ENCODE measurements at regions of chr19 and their contacts with region 1.

Region 1: GRCh38 chr19:41310033-41310758 is at the start of gene CCDC97:
- DNase-seq: peak; percentile 72 to 82
- ATAC-seq: peak; percentile 76 to 78
- H3K4me3 ChIP-seq: peak within 1 kb of the TSS; percentile 62 to 80 (median 73)
- H3K27ac ChIP-seq: peak within 1 kb of the TSS; percentile 88 to 95 (median 93)
- H3K4me1 ChIP-seq: peaks cover 35 to 42% of the 10 kb centered on the region in 2 donors
- H3K27me3 ChIP-seq: no peaks in the 10 kb centered on the region
- CTCF ChIP-seq: peak in 2 of 5 experiments; percentile 23 to 36
- POLR2A ChIP-seq: peak; percentile 65 to 72
- total RNA-seq, gene CCDC97: 8.6 to 15.3 (median 15.1) TPM

Region 2: GRCh38 chr19:41123716-41124294 is 186.4 kb before region 1 on chr19:
- in situ Hi-C with region 1: no loop called
- intact Hi-C with region 1: loop called (anchors 1 kb)
- DNase-seq: no peak
- ATAC-seq: no peak
- H3K4me3 ChIP-seq: no peak overlapping the region
- H3K27ac ChIP-seq: no peak overlapping the region
- H3K4me1 ChIP-seq: no peaks in the 10 kb centered on the region
- H3K27me3 ChIP-seq: no peaks in the 10 kb centered on the region
- CTCF ChIP-seq: no peak
- POLR2A ChIP-seq: no peak

Region 3: DNA sequence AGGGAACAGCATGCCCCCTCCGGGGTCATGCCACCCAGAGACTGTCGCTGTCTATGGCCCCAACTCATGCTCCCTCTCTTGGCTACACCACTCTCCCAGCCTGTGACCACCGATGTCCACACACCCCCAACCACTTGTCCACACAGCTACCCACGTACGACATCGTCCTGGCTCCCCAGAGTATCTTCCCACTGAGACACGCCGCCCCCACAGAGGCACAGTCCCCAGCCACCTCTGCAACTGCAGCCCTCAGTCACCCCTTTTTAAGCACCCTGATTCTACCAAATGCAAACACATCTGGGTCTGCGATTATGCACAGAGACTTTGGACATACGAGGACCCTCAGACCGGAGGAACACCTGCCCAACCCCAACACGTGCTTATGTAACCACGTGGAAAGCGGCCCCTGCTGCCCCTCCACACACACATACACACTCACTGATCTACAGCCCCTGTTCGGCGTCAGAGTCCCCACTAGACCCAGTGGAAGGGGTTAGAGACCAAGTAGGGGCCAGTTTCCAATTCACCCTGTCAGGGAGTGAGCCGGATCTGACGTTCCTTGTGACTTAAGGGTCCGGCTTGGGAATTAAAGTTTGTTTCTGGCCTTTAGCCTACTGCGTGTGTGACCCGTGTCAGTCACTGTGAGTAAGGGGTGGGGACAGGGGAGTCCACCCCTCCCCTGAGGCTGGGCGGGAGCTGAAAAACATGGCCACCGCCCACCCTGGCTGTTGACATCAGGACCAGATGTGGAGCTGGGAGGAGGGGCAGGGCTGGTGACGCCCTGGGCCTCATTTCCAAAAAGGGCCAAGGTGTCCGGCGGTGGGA is 103.1 kb before region 1 on chr19:
- in situ Hi-C with region 1: loop called in 1 of 4 experiments (anchors 5 kb)
- intact Hi-C with region 1: loop called (anchors 1 kb)
- DNase-seq: peak; percentile 67 to 88
- ATAC-seq: peak; percentile 60 to 79
- H3K4me3 ChIP-seq: no peak overlapping the region
- H3K27ac ChIP-seq: peak overlapping the region; percentile 58 to 65 (median 60)
- H3K4me1 ChIP-seq: no peaks in the 10 kb centered on the region
- H3K27me3 ChIP-seq: no peaks in the 10 kb centered on the region
- CTCF ChIP-seq: no peak
- POLR2A ChIP-seq: no peak

Region 4: GRCh38 chr19:41299755-41300314 is 10.4 kb before region 1 on chr19:
- in situ Hi-C with region 1: no loop called
- intact Hi-C with region 1: loop called (anchors 1 kb)
- DNase-seq: peak; percentile 68 to 87
- ATAC-seq: peak; percentile 79 to 88
- H3K4me3 ChIP-seq: no peak overlapping the region
- H3K27ac ChIP-seq: peak overlapping the region; percentile 81 to 89 (median 88)
- H3K4me1 ChIP-seq: peaks cover 35 to 53% of the 10 kb centered on the region in 2 donors
- H3K27me3 ChIP-seq: no peaks in the 10 kb centered on the region
- CTCF ChIP-seq: no peak
- POLR2A ChIP-seq: no peak

Region 5: DNA sequence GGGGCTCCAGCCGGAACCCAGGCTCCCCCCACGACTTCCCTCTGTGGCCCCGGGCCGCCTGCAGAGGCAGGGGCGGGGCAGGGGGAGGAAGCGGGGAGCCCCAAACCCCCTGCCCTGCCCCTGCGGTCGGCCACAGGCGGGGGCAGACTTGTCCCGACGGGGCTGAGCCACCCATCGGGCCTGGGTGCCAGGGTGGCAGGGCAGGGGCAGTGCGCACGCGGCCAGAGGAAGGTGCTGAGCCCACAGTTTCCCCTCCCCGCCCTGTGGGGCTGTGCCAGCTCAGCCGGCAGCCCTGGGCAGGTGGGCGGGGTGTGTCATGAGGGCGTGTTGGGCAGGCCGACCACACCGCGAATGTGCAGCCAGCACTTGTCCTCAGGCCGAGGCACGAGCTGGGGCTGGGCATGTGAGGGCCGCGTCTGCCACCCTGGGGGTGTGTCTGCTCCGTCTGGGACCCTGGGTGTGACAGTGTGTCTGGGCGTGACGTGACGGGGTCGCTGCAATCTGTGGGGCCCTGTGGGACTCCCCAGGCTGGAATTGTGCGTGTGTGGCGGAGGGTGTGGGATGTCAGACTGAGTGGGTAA is 17.5 kb after region 1 on chr19:
- in situ Hi-C with region 1: no loop called
- intact Hi-C with region 1: loop called (anchors 1 kb)
- DNase-seq: peak; percentile 38 to 76
- ATAC-seq: peak; percentile 12 to 38
- H3K4me3 ChIP-seq: peak overlapping the region; percentile 2 to 49 (median 23)
- H3K27ac ChIP-seq: peak overlapping the region; percentile 37 to 77 (median 68)
- H3K4me1 ChIP-seq: peaks cover 25 to 48% of the 10 kb centered on the region in 2 donors
- H3K27me3 ChIP-seq: no peaks in the 10 kb centered on the region
- CTCF ChIP-seq: no peak
- POLR2A ChIP-seq: no peak

Region 6: GRCh38 chr19:41341669-41342490 is 31.7 kb after region 1 on chr19:
- in situ Hi-C with region 1: no loop called
- intact Hi-C with region 1: no loop called
- DNase-seq: no peak
- ATAC-seq: no peak
- H3K4me3 ChIP-seq: no peak overlapping the region
- H3K27ac ChIP-seq: no peak overlapping the region
- H3K4me1 ChIP-seq: no peaks in the 10 kb centered on the region
- H3K27me3 ChIP-seq: no peaks in the 10 kb centered on the region
- CTCF ChIP-seq: no peak
- POLR2A ChIP-seq: no peak

Region 7: DNA sequence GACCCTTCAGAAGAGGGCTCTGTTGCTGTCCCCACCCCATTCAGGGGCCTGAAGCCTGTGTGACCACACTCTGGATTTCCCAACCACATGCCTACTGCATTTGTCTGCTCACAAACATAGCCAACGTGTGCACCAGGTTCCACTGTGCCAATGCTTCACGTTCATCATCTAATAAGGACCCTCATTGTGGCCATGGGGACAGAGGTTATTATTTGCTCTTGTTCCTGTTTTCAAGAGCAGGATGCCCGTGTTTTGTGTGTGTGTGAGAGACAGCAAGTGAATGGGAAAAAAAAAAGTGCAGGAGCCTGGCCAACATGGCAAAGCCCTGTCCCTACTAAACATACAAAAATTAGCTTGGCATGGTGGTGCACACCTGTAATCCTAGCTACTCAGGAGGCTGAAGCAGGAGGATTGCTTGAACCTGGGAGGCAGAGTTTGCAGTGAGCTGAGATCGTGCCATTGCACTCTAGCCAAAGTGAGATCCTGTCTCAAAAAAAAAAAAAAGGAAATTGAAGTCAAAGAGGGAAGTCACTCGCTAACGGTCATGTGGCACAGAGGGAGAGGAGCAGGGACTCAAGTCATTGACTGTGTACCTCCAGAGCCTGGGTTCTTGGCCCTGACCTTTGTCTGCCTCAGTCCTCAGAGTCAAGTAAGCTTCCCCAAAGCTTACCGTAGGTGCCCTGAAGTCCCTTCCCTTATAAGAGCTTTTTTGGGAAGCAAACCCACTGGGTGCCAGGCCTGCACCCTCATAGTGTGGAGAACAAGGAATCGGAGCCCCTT is 110.1 kb after region 1 on chr19:
- in situ Hi-C with region 1: no loop called
- intact Hi-C with region 1: no loop called
- DNase-seq: no peak
- ATAC-seq: no peak
- H3K4me3 ChIP-seq: no peak overlapping the region
- H3K27ac ChIP-seq: no peak overlapping the region
- H3K4me1 ChIP-seq: peaks cover under 1 to 2% of the 10 kb centered on the region in 2 donors
- H3K27me3 ChIP-seq: no peaks in the 10 kb centered on the region
- CTCF ChIP-seq: no peak
- POLR2A ChIP-seq: no peak